Breast epithelium (tissue), 4 donors: ENCODE measurements at regions of chr5 and their contacts with region 1.

Region 1: DNA sequence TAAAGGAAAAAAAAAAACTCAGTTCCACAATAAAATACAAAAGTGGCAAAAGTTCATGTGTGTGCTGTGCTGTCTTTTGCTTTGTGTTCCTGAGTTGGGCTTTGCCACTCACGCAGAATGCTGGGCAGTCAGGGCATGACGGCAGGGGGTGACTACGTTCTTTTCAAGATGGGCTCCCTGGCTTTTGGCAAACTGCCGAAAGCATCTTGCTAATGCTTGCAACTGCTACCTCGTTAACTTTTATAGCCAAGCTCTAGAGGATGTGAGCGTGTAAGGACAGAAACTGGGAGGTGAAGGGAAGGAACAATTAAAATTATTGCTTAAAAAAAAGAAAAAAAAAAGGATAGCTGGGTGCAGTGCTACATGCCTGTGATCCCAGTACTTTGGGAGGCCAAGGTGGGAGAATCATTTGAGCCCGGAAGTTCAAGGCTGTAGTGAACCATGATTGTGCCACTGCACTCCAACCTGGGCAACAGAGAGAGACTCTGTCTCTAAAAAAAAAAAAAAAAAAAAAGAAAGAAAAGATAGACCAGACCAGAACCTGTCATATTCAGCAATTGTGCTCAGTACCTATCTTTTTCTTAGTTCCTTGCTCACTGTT is 102.3 kb downstream of the MAP1B start:
- DNase-seq: peak in 1 of 2 donors; percentile 26
- H3K4me3 ChIP-seq: no peak overlapping the region
- H3K27ac ChIP-seq: no peak overlapping the region
- H3K4me1 ChIP-seq: peaks cover 0 to 13% of the 10 kb centered on the region in 2 donors
- H3K27me3 ChIP-seq: no peaks in the 10 kb centered on the region
- CTCF ChIP-seq: no peak
- POLR2A ChIP-seq: no peak

Region 2: GRCh38 chr5:72185496-72186329 is 23.9 kb before region 1 on chr5:
- intact Hi-C with region 1: loop called (anchors 1 kb)
- DNase-seq: no peak
- H3K4me3 ChIP-seq: no peak overlapping the region
- H3K27ac ChIP-seq: peak overlapping the region in 1 of 2 donors; percentile 32
- H3K4me1 ChIP-seq: no peaks in the 10 kb centered on the region
- H3K27me3 ChIP-seq: no peaks in the 10 kb centered on the region
- CTCF ChIP-seq: no peak
- POLR2A ChIP-seq: no peak

Region 3: DNA sequence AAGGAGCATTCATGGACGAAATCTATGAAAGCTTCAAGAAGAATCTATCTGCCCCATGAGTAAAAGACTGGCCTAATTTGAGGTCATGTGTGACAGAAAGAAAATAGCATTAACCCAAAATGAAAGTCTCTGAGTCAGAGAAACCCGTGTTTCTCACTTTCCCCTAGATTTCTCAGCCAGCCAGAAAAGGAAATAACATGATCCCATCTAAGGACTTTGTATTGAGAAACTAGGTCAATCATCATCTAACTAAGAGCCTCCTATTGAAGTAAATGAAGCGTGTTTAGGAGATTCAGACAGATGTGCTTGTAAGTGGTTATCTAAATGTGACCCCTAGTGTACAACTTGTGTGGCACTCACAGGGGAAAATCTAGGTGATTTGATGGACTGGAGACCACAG is 374.9 kb after region 1 on chr5:
- intact Hi-C with region 1: loop called (anchors 5 kb)
- DNase-seq: no peak
- H3K4me3 ChIP-seq: no peak overlapping the region
- H3K27ac ChIP-seq: peak overlapping the region in 1 of 2 donors; percentile 7
- H3K4me1 ChIP-seq: no peaks in the 10 kb centered on the region
- H3K27me3 ChIP-seq: no peaks in the 10 kb centered on the region
- CTCF ChIP-seq: no peak
- POLR2A ChIP-seq: no peak